Activated CD4-positive, alpha-beta T cell treated with anti-CD3 and anti-CD28 coated beads for 36 hours (primary cell): ENCODE measurements at regions of chr13 and their contacts with region 1.

Region 1: DNA sequence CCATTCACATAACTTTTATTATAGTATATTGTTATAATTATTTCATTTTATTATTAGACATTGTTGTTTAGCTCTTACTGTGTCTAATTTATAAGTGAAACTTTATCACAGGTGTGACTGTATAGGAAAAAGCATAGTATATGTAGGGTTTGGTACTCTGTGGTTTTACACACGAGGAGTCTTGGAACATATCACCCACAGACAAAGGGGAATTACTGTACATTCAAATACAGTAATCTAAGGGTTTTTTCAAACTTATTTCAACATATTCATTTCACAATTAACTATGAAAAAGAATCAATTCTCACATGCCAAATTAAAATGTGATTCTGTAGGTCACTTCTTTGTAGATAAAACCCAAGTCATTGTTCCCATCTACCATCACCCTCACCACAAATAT is 46.0 kb downstream of the RBM26 start:
- DNase-seq: no peak
- ATAC-seq: peak; percentile 44
- H3K4me3 Mint-ChIP-seq: no peak overlapping the region
- H3K27ac Mint-ChIP-seq: no peak overlapping the region
- H3K4me1 Mint-ChIP-seq: peaks cover 42% of the 10 kb centered on the region
- H3K27me3 Mint-ChIP-seq: no peaks in the 10 kb centered on the region

Region 2: GRCh38 chr13:79320433-79320832 is 39.7 kb before region 1 on chr13:
- CTCF ChIA-PET with region 1: no interaction called
- POLR2A ChIA-PET with region 1: no interaction called
- intact Hi-C with region 1: loop called in 1 of 2 experiments (anchors 5 kb)
- DNase-seq: no peak
- ATAC-seq: no peak
- H3K4me3 Mint-ChIP-seq: no peak overlapping the region
- H3K27ac Mint-ChIP-seq: no peak overlapping the region
- H3K4me1 Mint-ChIP-seq: peaks cover 11% of the 10 kb centered on the region
- H3K27me3 Mint-ChIP-seq: no peaks in the 10 kb centered on the region

Region 3: GRCh38 chr13:79496188-79496587 is 136.1 kb after region 1 on chr13:
- CTCF ChIA-PET with region 1: no interaction called
- POLR2A ChIA-PET with region 1: no interaction called
- intact Hi-C with region 1: no loop called
- DNase-seq: no peak
- ATAC-seq: no peak
- H3K4me3 Mint-ChIP-seq: no peak overlapping the region
- H3K27ac Mint-ChIP-seq: peak overlapping the region; percentile 59
- H3K4me1 Mint-ChIP-seq: peaks cover 91% of the 10 kb centered on the region
- H3K27me3 Mint-ChIP-seq: no peaks in the 10 kb centered on the region